Gastrocnemius medialis (tissue), 4 donors: ENCODE measurements at regions of chr10 and their contacts with region 1.

Region 1: DNA sequence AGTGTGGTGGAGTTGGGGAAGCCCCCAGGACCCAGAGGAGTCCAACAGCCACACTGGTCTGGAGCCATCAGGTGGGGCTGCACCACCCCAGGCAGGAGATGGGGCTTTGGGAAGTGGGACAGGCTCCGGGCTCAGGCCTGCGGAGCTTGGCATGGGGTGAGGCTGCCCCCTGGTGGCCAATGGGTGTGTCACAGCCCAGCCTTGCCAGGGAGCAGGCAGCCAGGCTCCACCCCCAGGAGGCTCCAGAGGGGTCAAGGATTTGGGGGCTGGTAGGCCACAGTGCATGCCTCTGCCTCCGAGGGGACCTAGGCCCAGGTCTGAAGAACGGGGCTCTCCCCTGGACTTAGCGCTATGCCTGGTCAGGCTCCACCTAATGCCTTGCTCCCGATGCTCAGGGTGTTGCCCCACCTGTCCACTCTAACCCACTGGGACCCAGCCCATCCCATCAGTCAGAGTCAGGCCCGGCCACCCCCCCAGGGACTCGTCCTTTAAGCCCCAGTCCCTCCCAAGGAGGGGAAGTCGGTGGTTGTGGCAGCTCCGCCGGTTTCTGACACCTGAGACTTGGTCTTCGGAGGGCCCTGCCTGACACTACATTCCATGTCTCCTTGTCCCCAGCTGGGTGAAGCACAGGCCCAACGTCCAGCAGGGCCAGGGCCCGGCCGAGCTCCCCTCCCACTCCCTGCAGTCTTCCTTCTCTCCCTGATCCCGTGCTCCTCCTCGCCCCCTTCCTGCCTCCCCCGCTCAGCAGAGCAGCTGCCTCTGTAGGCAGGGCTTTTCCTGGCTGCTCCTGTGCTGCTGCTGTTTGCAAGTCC is 11.3 kb upstream of the SAMD8 start:
- DNase-seq: peak; percentile 61 to 75
- ATAC-seq: peak; percentile 57 to 76
- H3K4me3 ChIP-seq: no peak overlapping the region
- H3K27ac ChIP-seq: peak overlapping the region; percentile 97 to 100 (median 98)
- H3K4me1 ChIP-seq: peaks cover 57% of the 10 kb centered on the region in 2 donors
- H3K27me3 ChIP-seq: no peaks in the 10 kb centered on the region
- CTCF ChIP-seq: peak; percentile 97 to 99 (median 99)
- POLR2A ChIP-seq: no peak

Region 2: DNA sequence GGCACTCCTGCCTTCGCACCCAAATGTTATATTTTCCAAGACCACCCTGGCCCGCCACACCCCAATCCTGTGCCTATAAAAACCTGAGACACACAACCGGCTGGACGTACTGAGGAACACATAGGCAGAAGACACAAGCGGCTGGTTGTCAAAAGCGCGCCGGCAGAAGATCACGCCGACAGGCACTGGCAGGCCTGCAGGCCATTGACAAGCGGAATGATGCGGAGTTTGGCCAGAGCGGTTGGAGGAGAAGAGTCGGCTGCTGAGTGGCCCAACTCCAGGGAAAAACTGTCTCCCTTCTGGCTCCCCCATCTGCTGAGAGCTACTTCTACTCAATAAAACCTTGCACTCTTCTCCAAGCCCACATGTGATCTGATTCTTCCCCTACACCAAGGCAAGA is 28.4 kb before region 1 on chr10:
- in situ Hi-C with region 1: no loop called
- intact Hi-C with region 1: loop called (anchors 2 kb)
- DNase-seq: no peak
- ATAC-seq: no peak
- H3K4me3 ChIP-seq: peak overlapping the region in 1 of 4 donors; percentile 66
- H3K27ac ChIP-seq: peak overlapping the region; percentile 79 to 96 (median 91)
- H3K4me1 ChIP-seq: peaks cover 28 to 35% of the 10 kb centered on the region in 2 donors
- H3K27me3 ChIP-seq: no peaks in the 10 kb centered on the region
- CTCF ChIP-seq: no peak
- POLR2A ChIP-seq: no peak